ENCODE measurements at regions of chr7 and their contacts with region 1.

Region 1: DNA sequence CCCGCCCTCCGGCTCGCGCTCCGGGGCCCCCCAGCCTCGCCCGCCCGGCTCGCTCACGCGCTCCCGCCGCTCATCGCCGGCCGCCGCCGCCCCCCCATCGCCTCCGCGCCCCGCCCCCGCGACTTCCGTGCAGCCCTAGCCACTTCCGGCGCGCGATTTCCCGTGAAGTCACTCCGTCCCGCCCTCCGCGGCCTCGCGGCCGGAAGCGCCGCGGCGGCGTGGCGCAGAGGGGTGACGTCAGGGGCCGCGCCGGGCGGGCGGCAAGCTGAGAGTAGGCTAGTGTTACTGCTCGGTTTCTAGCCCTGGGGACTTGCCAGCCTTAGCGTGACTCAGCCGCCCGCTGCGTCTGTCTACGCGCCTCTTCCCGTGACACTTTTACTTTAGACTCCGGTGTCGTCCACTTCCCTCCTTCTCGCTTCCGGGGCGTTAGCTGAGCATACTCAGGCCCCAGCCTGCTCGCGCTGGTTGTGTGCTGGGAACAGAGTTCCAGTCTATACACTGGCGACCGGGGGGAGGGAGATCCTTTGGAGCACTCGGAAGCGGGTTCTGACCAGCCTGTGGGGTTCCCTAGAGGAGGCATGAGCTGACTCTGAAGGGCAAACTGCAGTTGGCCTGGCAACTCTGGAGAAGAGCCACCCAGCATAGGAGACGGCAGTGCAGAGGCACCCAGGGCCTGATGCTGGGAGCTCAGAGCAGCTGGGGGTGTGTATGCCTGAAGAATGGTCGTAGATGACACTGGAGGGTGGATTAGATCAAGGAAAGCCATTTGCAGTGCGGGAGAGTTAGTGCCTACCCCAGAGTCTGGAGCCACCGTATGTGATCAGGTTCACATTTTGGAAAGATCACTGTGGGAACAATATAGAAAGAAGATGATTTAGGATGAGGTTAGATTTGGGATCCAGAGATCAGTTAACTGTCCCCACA is at the start of gene PURB:
- DNase-seq: peak; percentile 97
- H3K4me3 Mint-ChIP-seq: peak within 1 kb of the TSS; percentile 98
- H3K27ac Mint-ChIP-seq: peak within 1 kb of the TSS; percentile 100
- H3K4me1 Mint-ChIP-seq: peaks cover 67% of the 10 kb centered on the region
- H3K27me3 Mint-ChIP-seq: no peaks in the 10 kb centered on the region
- total RNA-seq, gene PURB: 42.1 and 42.6 TPM in 2 replicates

Region 2: DNA sequence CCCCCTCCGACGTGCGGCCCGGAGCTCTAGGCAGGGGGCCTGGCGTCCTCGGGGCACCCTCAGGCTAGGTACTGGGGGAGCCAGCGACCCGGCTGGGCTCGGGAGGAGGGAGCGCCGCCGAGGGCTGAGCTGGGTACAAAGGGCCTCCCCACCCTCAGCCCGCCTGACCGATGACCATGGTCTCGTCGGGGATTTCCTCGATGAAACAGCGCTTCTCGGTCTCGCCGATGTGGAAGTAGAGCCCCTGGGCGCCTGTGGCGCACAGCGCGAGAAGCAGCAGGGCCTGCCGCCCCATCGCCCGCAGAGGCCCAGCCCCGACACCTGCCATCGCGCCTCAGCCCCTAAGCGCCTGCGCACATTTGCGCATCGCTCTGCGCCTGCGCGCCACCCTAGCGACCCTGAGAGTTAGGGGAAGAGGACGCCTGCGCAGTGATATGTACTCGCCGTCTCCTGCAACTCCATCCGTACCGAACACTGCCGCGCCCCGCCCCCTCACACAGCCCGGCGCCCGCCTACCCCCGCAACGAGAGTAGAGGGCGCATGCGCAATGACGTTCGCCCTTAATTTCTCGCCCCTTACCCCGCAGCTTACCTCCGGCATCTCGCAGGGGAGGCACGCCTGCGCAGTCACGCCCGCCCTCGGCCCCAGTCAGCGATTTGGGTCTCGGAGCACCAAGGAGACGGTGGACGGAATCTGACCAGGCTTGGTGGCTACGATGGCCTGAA is 303.6 kb before region 1 on chr7 and contains the start of gene TMED4:
- intact Hi-C with region 1: loop called (anchors 1 kb)
- DNase-seq: peak; percentile 100
- H3K4me3 Mint-ChIP-seq: peak within 1 kb of the TSS; percentile 93
- H3K27ac Mint-ChIP-seq: peak within 1 kb of the TSS; percentile 93
- H3K4me1 Mint-ChIP-seq: peaks cover 33% of the 10 kb centered on the region
- H3K27me3 Mint-ChIP-seq: no peaks in the 10 kb centered on the region
- total RNA-seq, gene TMED4: 74.9 and 79.6 TPM in 2 replicates

Region 3: GRCh38 chr7:44867073-44867995 is 18.3 kb before region 1 on chr7:
- intact Hi-C with region 1: loop called (anchors 2 kb)
- DNase-seq: no peak
- H3K4me3 Mint-ChIP-seq: no peak overlapping the region
- H3K27ac Mint-ChIP-seq: peak overlapping the region; percentile 70
- H3K4me1 Mint-ChIP-seq: peaks cover 7% of the 10 kb centered on the region
- H3K27me3 Mint-ChIP-seq: peaks cover 4% of the 10 kb centered on the region

Region 4: GRCh38 chr7:44980393-44981034 is 94.9 kb after region 1 on chr7:
- intact Hi-C with region 1: loop called (anchors 1 kb)
- DNase-seq: peak; percentile 56
- H3K4me3 Mint-ChIP-seq: peak overlapping the region; percentile 98
- H3K27ac Mint-ChIP-seq: peak overlapping the region; percentile 98
- H3K4me1 Mint-ChIP-seq: peaks cover 78% of the 10 kb centered on the region
- H3K27me3 Mint-ChIP-seq: no peaks in the 10 kb centered on the region

Region 5: DNA sequence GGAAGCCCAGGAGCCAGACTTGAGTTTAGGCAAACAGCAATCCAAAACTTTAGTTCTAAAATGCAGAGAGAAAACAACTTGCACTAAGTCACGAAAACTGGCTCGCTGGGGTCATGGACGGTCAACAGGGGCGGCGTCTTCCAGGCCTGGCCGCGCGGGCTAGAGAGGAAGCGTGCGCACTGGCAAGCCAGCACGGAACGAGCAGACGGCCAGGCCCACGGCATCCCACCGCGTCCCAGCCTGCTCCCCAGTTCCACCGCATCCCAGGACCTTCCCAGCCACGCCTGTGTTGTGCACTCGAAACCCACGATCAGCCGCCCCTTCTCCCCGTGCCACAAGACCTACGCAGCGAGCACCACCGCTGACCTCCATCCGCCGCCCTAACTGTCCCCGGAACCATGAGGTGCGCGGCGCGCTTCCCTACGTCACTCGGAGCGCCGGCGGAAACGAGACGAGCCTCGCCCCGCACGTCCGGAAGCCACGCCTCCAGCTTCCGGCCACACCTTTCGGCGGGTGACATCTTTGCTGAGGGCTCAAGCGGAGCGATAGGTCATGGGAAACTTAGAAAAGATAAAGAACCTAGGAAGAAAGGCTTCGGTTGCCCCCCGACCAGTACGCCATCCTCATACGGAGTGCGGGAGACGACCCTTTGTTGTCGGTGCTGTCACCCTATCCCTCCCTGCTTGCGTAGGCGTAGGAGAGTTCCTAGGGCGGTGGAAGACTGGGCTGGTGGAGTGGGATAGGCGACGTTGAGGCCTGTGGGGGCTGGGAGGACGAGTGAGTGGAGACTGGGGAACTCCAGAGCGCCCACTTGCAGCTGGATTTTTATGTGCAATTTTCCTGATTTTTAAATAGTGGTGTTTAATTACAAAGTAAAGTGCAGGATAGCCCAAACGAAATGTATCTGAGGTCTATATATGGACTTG is 225.9 kb after region 1 on chr7 and contains the start of gene TBRG4:
- intact Hi-C with region 1: loop called (anchors 1 kb)
- DNase-seq: peak; percentile 94
- H3K4me3 Mint-ChIP-seq: peak within 1 kb of the TSS; percentile 96
- H3K27ac Mint-ChIP-seq: peak within 1 kb of the TSS; percentile 97
- H3K4me1 Mint-ChIP-seq: peaks cover 39% of the 10 kb centered on the region
- H3K27me3 Mint-ChIP-seq: peaks cover 12% of the 10 kb centered on the region
- total RNA-seq, gene TBRG4: 176 and 195 TPM in 2 replicates

Region 6: GRCh38 chr7:45129181-45129800 is 243.6 kb after region 1 on chr7:
- intact Hi-C with region 1: no loop called
- DNase-seq: no peak
- H3K4me3 Mint-ChIP-seq: no peak overlapping the region
- H3K27ac Mint-ChIP-seq: peak overlapping the region; percentile 37
- H3K4me1 Mint-ChIP-seq: no peaks in the 10 kb centered on the region
- H3K27me3 Mint-ChIP-seq: peaks cover 5% of the 10 kb centered on the region

Measured in activated T-helper 1 cell treated with anti-CD3 and anti-CD28 coated beads, Interleukin-12 subunit alpha, Interleukin-12 subunit beta, Interleukin-2, Interleukin-4 antibody, amounts not matched to agents 30 ng/mL and 10 ng/mL and 1 ng/mL, durations not matched to agents 14 hours and 24 hours and 36 hours (primary cell).